Aorta (tissue), 5 donors: ENCODE measurements at regions of chr1 and their contacts with region 1.

Region 1: GRCh38 chr1:160031365-160032164 is at the start of gene PIGM:
- DNase-seq: peak; percentile 95 to 97
- ATAC-seq: peak; percentile 96
- H3K4me3 ChIP-seq: peak within 1 kb of the TSS; percentile 58 to 70
- H3K27ac ChIP-seq: peak within 1 kb of the TSS in 1 of 2 donors; percentile 31
- H3K4me1 ChIP-seq: peaks cover 3 to 7% of the 10 kb centered on the region in 2 donors
- H3K27me3 ChIP-seq: no peaks in the 10 kb centered on the region
- total RNA-seq, gene PIGM: 5.3 to 6.7 TPM

Region 2: GRCh38 chr1:159780583-159781582 is 250.7 kb before region 1 on chr1 and contains the start of gene DUSP23:
- intact Hi-C with region 1: loop called in 1 of 2 experiments (anchors 5 kb)
- DNase-seq: peak; percentile 99
- ATAC-seq: peak; percentile 98
- H3K4me3 ChIP-seq: peak within 1 kb of the TSS; percentile 39 to 70
- H3K27ac ChIP-seq: peak within 1 kb of the TSS; percentile 33 to 49
- H3K4me1 ChIP-seq: peaks cover 0 to 7% of the 10 kb centered on the region in 2 donors
- H3K27me3 ChIP-seq: no peaks in the 10 kb centered on the region
- total RNA-seq, gene DUSP23: 47.1 to 47.7 TPM